Right lobe of liver (tissue), 6 donors: ENCODE measurements at regions of chr10 and their contacts with region 1.

Region 1: GRCh38 chr10:100446130-100446761 is 16.6 kb upstream of the WNT8B start:
- DNase-seq: no peak
- ATAC-seq: no peak
- H3K4me3 ChIP-seq: no peak overlapping the region
- H3K27ac ChIP-seq: no peak overlapping the region
- H3K4me1 ChIP-seq: no peaks in the 10 kb centered on the region
- H3K27me3 ChIP-seq: no peaks in the 10 kb centered on the region
- CTCF ChIP-seq: no peak
- POLR2A ChIP-seq: no peak

Region 2: DNA sequence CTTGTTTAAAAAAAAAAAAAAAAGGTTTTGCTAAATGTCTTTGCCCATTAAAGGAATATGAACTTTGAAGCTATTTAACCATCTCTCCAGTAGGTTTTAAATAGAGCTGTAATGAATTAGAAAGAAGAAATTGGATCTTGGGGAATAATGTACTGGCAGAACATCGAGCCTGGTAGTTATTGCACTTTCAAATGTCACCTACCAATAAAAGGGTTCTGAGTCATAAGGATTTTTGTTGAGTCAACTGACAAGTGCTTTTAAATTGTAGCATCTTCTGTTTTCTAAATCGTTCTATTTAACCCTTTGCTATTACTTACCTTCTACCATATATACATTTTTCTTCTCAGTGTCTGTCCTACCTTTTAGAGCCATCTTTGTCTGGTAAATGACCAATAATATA is 703.5 kb before region 1 on chr10:
- intact Hi-C with region 1: no loop called
- DNase-seq: no peak
- ATAC-seq: no peak
- H3K4me3 ChIP-seq: no peak overlapping the region
- H3K27ac ChIP-seq: no peak overlapping the region
- H3K4me1 ChIP-seq: no peaks in the 10 kb centered on the region
- H3K27me3 ChIP-seq: no peaks in the 10 kb centered on the region
- CTCF ChIP-seq: no peak
- POLR2A ChIP-seq: no peak

Region 3: DNA sequence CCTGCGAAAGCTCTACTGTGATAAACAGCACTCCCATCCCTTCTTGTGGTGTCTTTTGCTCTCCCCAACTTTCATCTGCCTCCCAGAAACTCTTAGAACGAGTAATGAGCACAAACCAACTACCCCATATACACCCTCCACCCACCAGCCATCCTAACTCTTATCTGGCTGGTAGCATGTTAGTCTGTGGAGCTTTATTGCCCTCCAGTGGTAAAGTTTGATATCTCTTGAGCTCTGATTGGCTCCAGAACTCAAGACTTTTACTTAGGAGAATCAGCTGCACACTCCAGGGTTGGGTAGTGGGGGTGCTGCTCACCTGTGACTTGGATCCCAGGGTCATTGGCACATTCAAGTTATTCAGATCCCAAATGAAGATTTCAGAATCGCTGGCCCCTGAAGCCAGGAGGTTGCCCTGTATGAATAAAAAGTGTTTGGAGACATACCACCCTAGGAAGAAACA is 62.5 kb after region 1 on chr10:
- intact Hi-C with region 1: loop called in 1 of 2 experiments (anchors 10 kb)
- DNase-seq: no peak
- ATAC-seq: peak; percentile 68 to 86 (median 80)
- H3K4me3 ChIP-seq: no peak overlapping the region
- H3K27ac ChIP-seq: no peak overlapping the region
- H3K4me1 ChIP-seq: no peaks in the 10 kb centered on the region
- H3K27me3 ChIP-seq: no peaks in the 10 kb centered on the region
- CTCF ChIP-seq: peak; percentile 51 to 56 (median 52)
- POLR2A ChIP-seq: no peak

Region 4: GRCh38 chr10:101041252-101041761 is 595.1 kb after region 1 on chr10:
- intact Hi-C with region 1: no loop called
- DNase-seq: peak in 2 of 3 donors; percentile 67 to 80
- ATAC-seq: peak; percentile 65 to 71 (median 68)
- H3K4me3 ChIP-seq: no peak overlapping the region
- H3K27ac ChIP-seq: no peak overlapping the region
- H3K4me1 ChIP-seq: peaks cover 0 to 12% (median 6%) of the 10 kb centered on the region in 4 donors
- H3K27me3 ChIP-seq: no peaks in the 10 kb centered on the region
- CTCF ChIP-seq: peak; percentile 66 to 90 (median 88)
- POLR2A ChIP-seq: no peak